Body of pancreas (tissue), 4 donors: ENCODE measurements at regions of chr3 and their contacts with region 1.

Region 1: GRCh38 chr3:37967260-37967881 is 23.2 kb upstream of the VILL start:
- DNase-seq: peak; percentile 69 to 79 (median 72)
- ATAC-seq: peak; percentile 66
- H3K4me3 ChIP-seq: no peak overlapping the region
- H3K27ac ChIP-seq: peak overlapping the region in 2 of 4 donors; percentile 26 to 75
- H3K4me1 ChIP-seq: peaks cover 40% of the 10 kb centered on the region
- H3K27me3 ChIP-seq: no peaks in the 10 kb centered on the region
- CTCF ChIP-seq: peak; percentile 67 to 86 (median 74)
- POLR2A ChIP-seq: no peak

Region 2: DNA sequence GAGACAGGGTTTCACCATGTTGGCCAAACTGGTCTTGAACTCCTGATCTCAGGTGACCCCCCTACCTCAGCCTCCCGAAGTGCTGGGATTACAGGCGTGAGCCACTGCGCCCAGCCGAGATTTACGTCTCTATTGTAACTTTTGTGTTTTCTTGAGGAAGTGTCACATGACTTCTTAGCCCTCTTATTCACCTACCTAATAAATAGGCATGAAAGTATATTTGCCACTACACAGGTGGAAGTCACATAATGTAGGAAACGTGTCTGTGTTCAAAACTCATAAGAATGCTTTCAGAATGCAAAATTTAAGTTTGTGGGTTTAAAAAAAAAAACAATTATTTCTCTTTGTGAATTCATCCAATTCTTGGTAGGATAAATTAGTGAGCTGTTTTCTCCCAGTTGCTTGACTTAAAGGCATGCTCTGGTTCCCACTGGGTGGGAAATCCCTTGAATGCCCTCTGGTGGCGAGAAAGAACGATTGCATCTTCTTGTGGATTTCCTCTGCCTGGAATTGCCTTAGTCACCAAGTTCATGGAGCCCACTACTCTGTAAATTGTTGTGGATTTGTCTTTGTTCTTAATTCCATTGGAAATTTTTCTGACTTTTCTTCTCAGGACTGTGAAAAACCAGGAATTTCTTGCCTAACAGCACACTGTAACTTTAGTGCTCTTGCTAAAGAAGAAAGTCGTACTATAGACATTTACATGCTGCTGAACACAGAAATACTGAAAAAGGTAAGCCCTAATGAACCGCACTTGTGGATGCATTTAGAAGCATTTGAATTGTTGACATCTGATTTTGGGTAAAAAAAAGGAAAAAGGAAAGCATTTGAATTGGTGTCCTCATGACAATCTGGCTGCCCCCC is 187.8 kb before region 1 on chr3:
- intact Hi-C with region 1: no loop called
- DNase-seq: peak; percentile 30 to 59 (median 44)
- ATAC-seq: peak; percentile 85
- H3K4me3 ChIP-seq: no peak overlapping the region
- H3K27ac ChIP-seq: no peak overlapping the region
- H3K4me1 ChIP-seq: no peaks in the 10 kb centered on the region
- H3K27me3 ChIP-seq: no peaks in the 10 kb centered on the region
- CTCF ChIP-seq: peak; percentile 53 to 87 (median 83)
- POLR2A ChIP-seq: no peak

Region 3: DNA sequence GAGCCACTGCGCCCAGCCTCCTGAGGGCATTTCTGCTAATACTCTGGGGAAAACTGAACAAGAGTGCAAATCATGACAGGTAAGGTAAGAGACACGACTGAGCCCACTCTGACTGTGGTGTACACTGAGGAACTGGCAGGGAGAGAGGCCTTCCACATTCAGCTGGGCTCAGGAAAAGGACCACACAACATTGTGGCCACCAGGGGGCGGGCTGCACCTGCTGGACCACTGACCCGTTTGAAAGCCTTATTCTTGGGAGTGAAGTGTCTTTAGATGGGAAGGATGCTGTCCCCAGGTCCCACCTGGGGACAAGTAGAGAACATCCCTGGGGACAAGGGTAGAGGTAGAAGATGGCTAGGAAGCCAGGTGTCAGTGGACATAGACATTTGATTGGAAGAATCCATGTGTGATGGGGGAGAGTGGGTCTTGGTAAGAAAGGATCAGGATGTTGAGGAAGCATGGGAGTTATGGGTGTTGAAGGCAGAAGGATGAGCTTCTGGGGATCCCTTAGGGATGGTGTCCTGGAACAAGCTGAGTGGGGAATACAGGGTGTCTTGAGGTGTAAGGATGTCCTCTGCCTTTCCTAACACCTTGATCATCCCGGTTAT is 111.9 kb before region 1 on chr3:
- intact Hi-C with region 1: loop called (anchors 5 kb)
- DNase-seq: peak; percentile 84 to 91 (median 86)
- ATAC-seq: peak; percentile 56
- H3K4me3 ChIP-seq: no peak overlapping the region
- H3K27ac ChIP-seq: no peak overlapping the region
- H3K4me1 ChIP-seq: peaks cover 8% of the 10 kb centered on the region
- H3K27me3 ChIP-seq: no peaks in the 10 kb centered on the region
- CTCF ChIP-seq: peak; percentile 86 to 92 (median 90)
- POLR2A ChIP-seq: no peak

Region 4: DNA sequence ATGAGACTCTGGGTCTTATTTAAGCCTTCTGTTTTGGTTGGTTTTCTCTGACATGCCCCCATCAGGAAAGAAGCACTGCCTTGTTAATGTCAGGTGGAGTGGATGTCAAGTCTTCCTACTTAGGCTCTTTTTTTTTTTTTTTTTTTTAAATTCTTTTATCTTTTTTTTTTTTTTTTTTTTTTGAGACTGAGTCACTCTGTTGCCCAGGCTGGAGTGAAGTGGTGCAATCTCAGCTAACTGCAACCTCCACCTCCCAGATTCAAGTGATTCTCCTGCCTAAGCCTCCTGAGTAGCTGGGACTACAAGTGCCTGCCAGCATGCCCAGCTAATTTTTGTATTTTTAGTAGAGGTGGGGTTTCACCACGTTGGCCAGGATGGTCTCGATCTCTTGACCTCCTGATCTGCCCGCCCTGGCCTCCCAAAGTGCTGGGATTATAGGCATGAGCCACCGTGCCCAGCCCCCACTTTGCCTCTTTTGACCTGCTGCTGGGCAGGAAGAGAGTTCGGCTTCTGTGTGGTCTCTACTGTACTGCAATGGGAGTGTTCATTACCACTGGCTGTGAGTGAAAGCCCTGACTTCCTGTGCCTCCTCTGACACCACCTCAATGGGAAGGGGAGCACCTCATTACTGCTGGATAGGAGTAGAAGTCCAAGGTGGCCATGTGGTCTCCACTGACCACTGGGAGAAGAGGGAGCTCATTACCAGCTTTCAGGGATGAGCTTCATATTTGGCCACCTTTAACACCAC is 94.8 kb before region 1 on chr3:
- intact Hi-C with region 1: no loop called
- DNase-seq: no peak
- ATAC-seq: no peak
- H3K4me3 ChIP-seq: no peak overlapping the region
- H3K27ac ChIP-seq: no peak overlapping the region
- H3K4me1 ChIP-seq: no peaks in the 10 kb centered on the region
- H3K27me3 ChIP-seq: no peaks in the 10 kb centered on the region
- CTCF ChIP-seq: no peak
- POLR2A ChIP-seq: no peak